ENCODE measurements at regions of chr3 and their contacts with region 1.

Region 1: GRCh38 chr3:48273594-48274211 is 32.8 kb downstream of the ZNF589 start:
- DNase-seq: peak; percentile 30 to 82
- ATAC-seq: peak; percentile 68 to 78 (median 70)
- H3K4me3 ChIP-seq: no peak overlapping the region
- H3K4me3 Mint-ChIP-seq: no peak overlapping the region
- H3K27ac ChIP-seq: no peak overlapping the region
- H3K27ac Mint-ChIP-seq: no peak overlapping the region
- H3K4me1 ChIP-seq: no peaks in the 10 kb centered on the region
- H3K4me1 Mint-ChIP-seq: peaks cover 0 to 5% of the 10 kb centered on the region in 2 donors
- H3K27me3 ChIP-seq: no peaks in the 10 kb centered on the region
- H3K27me3 Mint-ChIP-seq: no peaks in the 10 kb centered on the region
- CTCF ChIP-seq: peak; percentile 74

Region 2: DNA sequence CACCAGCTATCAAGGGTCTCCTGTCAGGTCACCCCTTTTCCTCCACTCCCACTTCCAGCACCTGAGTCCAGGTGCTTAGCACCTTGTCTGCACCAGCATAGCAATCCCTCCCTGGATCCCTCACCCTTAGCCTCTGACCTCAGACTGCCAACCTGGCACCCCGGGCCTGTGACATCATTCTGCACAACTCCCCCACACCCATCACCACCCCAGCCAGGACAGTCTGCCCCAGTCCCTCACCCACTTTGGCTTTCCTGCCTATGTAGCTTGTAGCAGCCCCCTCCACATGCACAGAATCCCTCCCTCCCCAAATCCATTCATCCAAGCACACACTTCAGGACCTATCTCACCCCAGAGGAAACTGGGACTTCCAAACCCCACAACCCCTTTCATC is 157.0 kb after region 1 on chr3:
- intact Hi-C with region 1: no loop called
- DNase-seq: no peak
- ATAC-seq: no peak
- H3K4me3 ChIP-seq: no peak overlapping the region
- H3K4me3 Mint-ChIP-seq: peak overlapping the region; percentile 68
- H3K27ac ChIP-seq: no peak overlapping the region
- H3K27ac Mint-ChIP-seq: peak overlapping the region in 1 of 2 donors; percentile 89
- H3K4me1 ChIP-seq: peaks cover 47% of the 10 kb centered on the region
- H3K4me1 Mint-ChIP-seq: peaks cover 0 to 38% of the 10 kb centered on the region in 2 donors
- H3K27me3 ChIP-seq: no peaks in the 10 kb centered on the region
- H3K27me3 Mint-ChIP-seq: peaks cover 0 to 5% of the 10 kb centered on the region in 2 donors
- CTCF ChIP-seq: no peak

Region 3: DNA sequence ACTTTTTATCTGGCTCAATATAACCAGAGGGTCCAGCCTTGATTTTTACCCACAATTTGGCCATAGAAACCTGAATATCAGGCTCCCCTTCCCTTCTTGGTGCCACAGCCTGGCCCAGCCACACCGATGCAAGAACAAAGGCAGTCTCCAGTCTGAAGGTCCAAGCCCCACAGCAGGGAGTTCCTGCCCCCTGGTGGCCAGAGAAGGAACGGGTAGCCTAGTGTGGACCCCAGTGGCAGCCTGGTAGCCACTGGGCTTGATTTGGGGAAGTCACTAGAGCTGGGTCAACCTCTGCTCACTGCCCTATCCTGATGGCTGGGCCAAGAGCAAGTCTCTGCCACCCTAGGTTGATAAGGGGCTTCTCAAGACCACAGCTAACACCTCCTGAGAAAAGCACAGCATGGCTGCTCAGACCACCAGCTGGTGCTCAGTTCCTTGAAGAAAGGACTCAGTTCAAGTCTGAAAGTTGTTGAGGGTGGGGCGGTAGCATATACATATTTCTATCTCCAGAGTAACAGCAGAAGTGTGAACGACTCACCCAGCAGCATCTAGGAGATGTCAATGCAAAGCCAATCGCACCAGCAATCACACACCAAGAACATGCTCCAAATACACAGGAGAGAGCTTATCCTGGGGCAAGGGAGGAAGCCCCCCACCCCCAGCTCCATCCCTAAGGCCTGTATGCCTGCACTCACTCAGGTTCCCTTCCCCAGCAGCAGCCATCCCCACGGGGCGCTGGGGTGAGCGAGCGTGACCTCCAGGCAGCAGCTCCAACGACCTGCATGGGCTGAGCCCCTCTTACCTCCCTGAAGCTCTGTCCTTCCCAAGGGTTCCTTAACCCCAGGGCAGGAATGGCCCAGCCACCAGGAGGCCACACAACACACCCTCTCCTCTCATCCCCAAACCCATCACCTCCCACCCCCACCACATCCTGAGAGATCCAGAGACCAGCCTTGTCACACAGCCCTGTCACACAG is 275.3 kb after region 1 on chr3:
- intact Hi-C with region 1: loop called (anchors 1 kb)
- DNase-seq: peak; percentile 80 to 89
- ATAC-seq: peak; percentile 92 to 100 (median 99)
- H3K4me3 ChIP-seq: no peak overlapping the region
- H3K4me3 Mint-ChIP-seq: no peak overlapping the region
- H3K27ac ChIP-seq: no peak overlapping the region
- H3K27ac Mint-ChIP-seq: no peak overlapping the region
- H3K4me1 ChIP-seq: peaks cover 8% of the 10 kb centered on the region
- H3K4me1 Mint-ChIP-seq: no peaks in the 10 kb centered on the region
- H3K27me3 ChIP-seq: no peaks in the 10 kb centered on the region
- H3K27me3 Mint-ChIP-seq: no peaks in the 10 kb centered on the region
- CTCF ChIP-seq: peak; percentile 89